GM13976 (cell line): ENCODE measurements at regions of chr18 and their contacts with region 1.

Region 1: GRCh38 chr18:31546476-31546875 is 45.2 kb upstream of the TTR start:
- DNase-seq: no peak
- CTCF ChIP-seq: no peak

Region 2: DNA sequence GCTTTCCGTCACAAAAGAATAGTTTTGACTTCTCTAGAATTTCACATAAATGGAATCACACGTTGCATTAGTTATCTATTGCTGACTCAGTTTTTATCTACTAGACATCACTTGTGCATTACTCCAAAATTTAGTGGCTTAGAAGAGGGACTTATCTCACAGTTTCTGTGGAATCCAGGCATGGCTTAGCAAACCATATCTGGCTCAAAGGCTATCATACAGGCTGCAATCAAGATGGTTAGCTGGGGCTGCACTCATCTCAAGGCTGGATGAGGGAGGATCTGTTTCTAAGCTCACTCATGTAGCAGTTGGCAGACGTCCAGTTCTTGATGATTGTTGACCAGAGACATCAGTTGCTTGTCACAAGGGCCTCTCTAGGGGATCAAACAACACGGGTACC is 497.3 kb before region 1 on chr18:
- in situ Hi-C with region 1: no loop called
- DNase-seq: no peak
- CTCF ChIP-seq: no peak

Region 3: DNA sequence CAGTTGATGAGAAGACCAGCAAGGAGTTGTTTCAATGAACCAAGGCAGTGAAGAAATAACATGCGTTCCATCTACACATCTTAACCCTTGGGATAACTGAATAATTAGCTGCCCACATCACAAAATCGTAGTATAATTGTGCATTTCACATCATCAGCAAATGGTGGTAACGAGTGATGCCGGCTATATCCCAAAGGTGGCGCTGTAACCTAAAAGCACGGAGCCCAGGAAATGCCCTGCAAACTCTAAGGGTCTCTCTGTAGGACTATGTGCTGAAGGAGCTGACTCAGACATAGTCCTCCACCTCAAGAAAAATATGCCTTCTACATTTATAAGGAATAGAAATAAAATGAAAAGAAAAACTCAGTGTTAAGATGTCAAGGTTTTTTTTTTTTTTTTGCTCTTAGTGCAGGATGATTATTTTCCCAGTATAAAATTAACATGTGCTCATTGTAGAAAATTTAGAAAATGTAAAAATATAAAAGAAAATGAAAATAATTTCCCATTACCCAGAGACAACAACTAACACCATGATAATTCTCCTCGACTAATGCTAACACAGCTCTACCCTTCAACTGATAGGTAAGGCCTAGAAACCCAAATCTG is 122.0 kb before region 1 on chr18:
- in situ Hi-C with region 1: loop called (anchors 10 kb)
- DNase-seq: peak; percentile 39
- CTCF ChIP-seq: peak; percentile 73

Region 4: GRCh38 chr18:33440060-33441043 is 1893.9 kb after region 1 on chr18 and contains the start of gene CCDC178:
- in situ Hi-C with region 1: no loop called
- DNase-seq: peak; percentile 40
- CTCF ChIP-seq: peak; percentile 12